Activated CD8-positive, alpha-beta T cell treated with anti-CD3 and anti-CD28 coated beads for 36 hours (primary cell): ENCODE measurements at regions of chr19 and their contacts with region 1.

Region 1: DNA sequence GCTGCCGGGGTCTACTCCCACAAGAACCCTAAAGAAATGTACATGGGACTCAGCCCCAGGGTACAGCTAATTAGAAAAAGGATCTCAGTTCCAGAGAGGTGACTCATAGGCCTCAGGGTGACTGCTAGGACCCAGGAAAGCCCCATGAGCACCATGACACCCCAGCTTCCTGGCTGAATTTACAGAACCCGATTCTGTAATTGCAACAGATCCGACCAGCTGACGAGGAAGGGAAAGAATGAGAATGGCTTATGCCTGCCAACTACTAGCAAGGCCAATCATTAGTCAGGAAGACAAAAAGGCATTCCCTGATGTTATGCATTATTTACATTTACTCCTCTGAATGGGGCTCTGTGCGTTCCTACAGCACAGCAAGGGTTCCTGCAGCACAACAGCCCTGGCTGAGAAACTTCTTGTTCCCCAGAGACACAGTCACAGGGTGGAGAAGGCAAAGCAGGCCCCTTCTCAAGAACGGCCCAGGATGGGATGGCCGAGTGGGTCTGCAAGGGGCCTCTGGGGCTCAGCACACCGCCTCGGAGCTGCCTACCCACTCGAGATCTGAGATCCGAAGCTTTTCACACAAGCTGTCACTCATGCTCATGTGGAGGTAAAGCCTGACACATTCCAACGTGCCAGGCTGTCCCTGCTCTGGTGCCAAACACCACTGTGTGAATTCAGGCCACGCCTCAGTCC is 27.2 kb downstream of the PBX4 start:
- DNase-seq: peak; percentile 86
- ATAC-seq: peak; percentile 90
- H3K4me3 Mint-ChIP-seq: peak overlapping the region; percentile 47
- H3K27ac Mint-ChIP-seq: peak overlapping the region; percentile 93
- H3K4me1 Mint-ChIP-seq: peaks cover 60% of the 10 kb centered on the region
- H3K27me3 Mint-ChIP-seq: no peaks in the 10 kb centered on the region
- CTCF ChIP-seq: no peak

Region 2: DNA sequence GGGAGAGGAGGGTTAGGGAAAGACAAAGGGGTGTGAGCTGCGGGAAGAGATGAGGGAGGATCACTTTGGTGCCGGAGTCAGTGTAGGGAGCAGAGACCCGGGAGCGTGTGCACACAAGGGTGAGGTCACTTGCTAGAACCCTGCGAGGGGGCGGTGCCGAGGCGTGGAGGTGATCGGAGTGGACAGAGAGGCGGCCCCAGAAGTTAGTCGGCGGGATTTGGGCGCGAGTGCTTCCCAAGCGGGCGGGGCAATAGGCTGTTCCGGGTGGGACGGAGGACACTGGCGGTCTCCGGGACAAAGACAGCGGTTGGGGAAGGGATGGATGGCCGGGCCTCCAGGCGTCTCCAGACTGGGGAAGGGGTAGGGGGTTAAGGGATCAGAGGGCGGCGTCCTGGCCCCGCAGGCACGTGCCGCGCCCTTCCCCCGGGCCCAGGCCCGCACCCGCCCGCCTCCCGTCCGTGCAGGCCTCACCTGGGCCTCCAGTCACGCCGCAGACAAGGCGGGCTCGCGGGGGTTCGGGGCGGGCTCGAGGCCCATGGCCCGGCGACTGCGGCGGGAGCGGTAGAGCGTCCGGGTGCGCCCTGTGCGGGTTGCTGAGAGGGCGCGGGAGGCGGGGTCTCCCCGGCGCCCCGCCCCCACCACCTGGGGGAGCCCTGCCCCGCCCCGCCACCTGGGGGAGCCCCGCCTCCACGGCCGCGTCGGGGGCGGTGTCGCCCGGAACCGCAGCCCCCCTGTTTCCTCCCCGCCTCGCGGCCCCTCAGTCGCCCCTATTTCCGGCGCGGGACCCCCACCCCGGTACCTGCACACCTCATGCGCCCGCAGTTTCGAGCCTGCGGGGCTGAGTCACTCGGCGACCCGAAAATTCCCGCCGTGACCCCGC is 36.6 kb after region 1 on chr19 and contains the start of gene LPAR2:
- CTCF ChIA-PET with region 1: no interaction called
- POLR2A ChIA-PET with region 1: interaction called, 15 read pairs
- intact Hi-C with region 1: no loop called
- DNase-seq: peak; percentile 79
- ATAC-seq: peak; percentile 78
- H3K4me3 Mint-ChIP-seq: peak within 1 kb of the TSS; percentile 85
- H3K27ac Mint-ChIP-seq: peak within 1 kb of the TSS; percentile 94
- H3K4me1 Mint-ChIP-seq: peaks cover 24% of the 10 kb centered on the region
- H3K27me3 Mint-ChIP-seq: no peaks in the 10 kb centered on the region
- CTCF ChIP-seq: no peak
- total RNA-seq, gene LPAR2: 26.6 to 28.2 TPM